CD8-positive, alpha-beta T cell (primary cell): ENCODE measurements at regions of chrX and their contacts with region 1.

Region 1: GRCh38 chrX:50747471-50747900 is 66.5 kb downstream of the SHROOM4 start:
- DNase-seq: peak in 2 of 9 experiments; percentile 2 to 3
- ATAC-seq: no peak
- H3K4me3 ChIP-seq: no peak overlapping the region
- H3K4me3 Mint-ChIP-seq: no peak overlapping the region
- H3K27ac ChIP-seq: no peak overlapping the region
- H3K27ac Mint-ChIP-seq: no peak overlapping the region
- H3K4me1 ChIP-seq: no peaks in the 10 kb centered on the region
- H3K4me1 Mint-ChIP-seq: no peaks in the 10 kb centered on the region
- H3K27me3 ChIP-seq: no peaks in the 10 kb centered on the region
- H3K27me3 Mint-ChIP-seq: peaks cover 6% of the 10 kb centered on the region
- CTCF ChIP-seq: peak; percentile 14

Region 2: DNA sequence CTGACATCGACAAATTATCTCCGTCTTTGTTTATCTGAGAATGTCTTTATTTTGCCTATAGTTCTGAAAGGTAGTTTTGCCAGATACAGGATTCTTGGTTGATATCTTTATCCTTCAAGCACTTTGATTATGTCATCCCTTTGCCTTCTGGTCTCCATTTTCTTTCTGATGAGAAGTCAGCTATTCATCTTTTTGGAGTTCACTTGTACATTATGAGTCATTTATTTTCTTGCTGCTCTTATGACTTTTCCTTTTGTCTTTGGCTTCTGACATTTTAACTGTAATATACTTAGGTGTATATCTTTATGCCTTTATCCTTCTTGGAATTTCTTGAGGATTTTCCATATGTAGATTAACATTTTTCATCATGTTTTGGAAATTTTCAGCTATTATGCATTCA is 15.1 kb after region 1 on chrX:
- CTCF ChIA-PET with region 1: no interaction called
- POLR2A ChIA-PET with region 1: no interaction called
- intact Hi-C with region 1: loop called in 1 of 2 experiments (anchors 1 kb)
- DNase-seq: no peak
- ATAC-seq: no peak
- H3K4me3 ChIP-seq: no peak overlapping the region
- H3K4me3 Mint-ChIP-seq: no peak overlapping the region
- H3K27ac ChIP-seq: no peak overlapping the region
- H3K27ac Mint-ChIP-seq: no peak overlapping the region
- H3K4me1 ChIP-seq: no peaks in the 10 kb centered on the region
- H3K4me1 Mint-ChIP-seq: no peaks in the 10 kb centered on the region
- H3K27me3 ChIP-seq: no peaks in the 10 kb centered on the region
- H3K27me3 Mint-ChIP-seq: peaks cover 4% of the 10 kb centered on the region
- CTCF ChIP-seq: no peak